CD8-positive, alpha-beta T cell (primary cell): ENCODE measurements at regions of chr1 and their contacts with region 1.

Region 1: GRCh38 chr1:229341774-229342655 is 832 bp downstream of the CCSAP start:
- DNase-seq: peak; percentile 61 to 90 (median 82)
- ATAC-seq: peak; percentile 80
- H3K4me3 ChIP-seq: peak overlapping the region; percentile 65 to 74
- H3K4me3 Mint-ChIP-seq: peak overlapping the region; percentile 92
- H3K27ac ChIP-seq: peak overlapping the region; percentile 48 to 83
- H3K27ac Mint-ChIP-seq: peak overlapping the region; percentile 87
- H3K4me1 ChIP-seq: peaks cover 18% of the 10 kb centered on the region
- H3K4me1 Mint-ChIP-seq: peaks cover 40% of the 10 kb centered on the region
- H3K27me3 ChIP-seq: no peaks in the 10 kb centered on the region
- H3K27me3 Mint-ChIP-seq: no peaks in the 10 kb centered on the region
- CTCF ChIP-seq: no peak

Region 2: DNA sequence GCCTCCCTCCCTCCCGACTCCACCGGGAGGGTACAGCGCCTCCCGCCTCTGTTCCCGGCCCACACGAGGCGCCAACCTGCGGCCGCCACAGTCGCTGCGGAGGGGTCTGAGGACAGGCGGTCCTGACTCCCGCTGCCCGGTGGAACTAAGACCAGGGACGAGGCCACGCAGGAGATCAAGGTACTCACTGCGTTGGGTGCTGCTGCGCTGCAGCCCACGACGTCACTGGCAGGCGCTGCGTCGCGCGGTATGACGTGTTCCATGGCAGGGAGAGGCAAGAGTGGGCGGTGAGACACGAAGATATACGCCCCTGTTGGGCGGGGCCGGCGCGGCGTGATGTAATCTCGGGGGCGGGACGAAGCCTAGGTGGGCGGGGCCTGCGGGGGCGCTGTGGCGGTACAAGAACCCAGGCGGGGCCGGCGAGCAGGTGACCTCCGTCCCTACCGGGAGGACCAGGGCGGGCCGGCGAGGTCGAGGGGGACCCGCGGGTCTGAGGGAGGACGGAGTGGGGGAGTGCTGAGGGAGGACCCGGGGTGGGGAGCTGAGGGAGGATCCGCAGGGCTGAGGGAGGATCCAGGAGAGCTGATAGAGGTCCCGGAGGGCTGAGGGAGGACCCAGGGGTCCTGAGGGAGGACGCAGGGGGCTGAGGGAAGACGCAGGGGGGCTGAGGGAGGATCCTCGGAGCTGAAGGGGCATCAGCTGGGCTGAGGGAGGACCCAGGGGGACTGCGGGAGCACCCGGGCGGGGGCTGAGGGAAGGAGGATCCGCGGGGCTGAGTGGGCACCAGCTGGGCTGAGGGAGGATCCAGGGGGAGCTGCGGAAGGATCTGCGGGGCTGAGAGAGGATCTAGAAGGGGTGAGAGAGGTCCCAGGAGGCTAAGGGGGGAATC is 1232.7 kb before region 1 on chr1 and contains the start of gene MRPL55:
- CTCF ChIA-PET with region 1: no interaction called
- POLR2A ChIA-PET with region 1: no interaction called
- intact Hi-C with region 1: loop called in 1 of 2 experiments (anchors 10 kb)
- DNase-seq: peak; percentile 97 to 100 (median 98)
- ATAC-seq: peak; percentile 97
- H3K4me3 ChIP-seq: peak within 1 kb of the TSS; percentile 93 to 98
- H3K4me3 Mint-ChIP-seq: peak within 1 kb of the TSS; percentile 95
- H3K27ac ChIP-seq: peak within 1 kb of the TSS; percentile 90 to 94
- H3K27ac Mint-ChIP-seq: peak within 1 kb of the TSS; percentile 96
- H3K4me1 ChIP-seq: peaks cover 21% of the 10 kb centered on the region
- H3K4me1 Mint-ChIP-seq: peaks cover 26% of the 10 kb centered on the region
- H3K27me3 ChIP-seq: no peaks in the 10 kb centered on the region
- H3K27me3 Mint-ChIP-seq: no peaks in the 10 kb centered on the region
- CTCF ChIP-seq: no peak
- total RNA-seq, gene MRPL55: 90.2 to 90.7 TPM

Region 3: DNA sequence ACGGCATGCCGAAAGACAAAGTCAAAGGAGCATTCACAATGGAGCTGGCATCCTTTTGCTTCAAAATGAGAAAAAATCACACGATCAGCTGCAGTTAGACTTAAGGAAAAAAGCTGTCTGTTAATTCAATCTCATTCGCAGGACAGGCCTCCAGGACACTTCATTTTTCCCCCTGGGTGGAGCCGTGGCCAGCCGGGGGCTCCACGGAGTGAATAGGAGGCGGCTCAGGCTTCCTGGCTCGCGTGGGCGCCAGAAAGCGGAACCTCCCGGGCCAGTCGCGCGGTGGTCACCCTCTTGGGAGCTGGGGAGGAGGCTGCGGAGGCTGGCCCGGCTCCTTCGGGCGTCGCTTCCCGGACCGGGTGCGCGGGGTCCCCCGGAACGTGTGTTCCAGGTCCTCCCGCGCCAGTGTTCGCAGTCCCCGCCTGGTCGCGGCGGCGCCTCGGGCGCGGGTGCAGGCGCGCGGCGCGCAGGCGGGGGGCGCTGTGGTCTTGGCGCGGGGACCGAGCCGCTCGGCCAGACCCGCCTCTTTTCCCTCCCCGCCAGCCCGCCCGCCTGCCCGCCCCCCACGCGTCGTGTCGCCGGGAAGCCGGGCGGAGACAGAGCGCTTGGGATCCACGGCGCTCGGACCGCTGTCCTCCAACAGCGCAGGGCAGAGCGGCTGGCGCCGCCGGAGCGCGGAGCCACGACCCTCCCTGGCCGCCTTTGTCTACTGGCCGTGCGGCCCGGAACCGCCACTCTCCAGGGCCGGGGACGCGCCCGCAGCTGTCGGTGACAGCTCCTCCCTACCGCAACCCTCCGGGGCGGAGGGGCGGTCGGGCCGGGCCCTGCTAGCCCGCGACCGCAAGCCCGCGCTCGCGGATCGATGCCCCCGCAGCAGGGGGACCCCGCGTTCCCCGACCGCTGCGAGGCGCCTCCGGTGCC is 606.9 kb before region 1 on chr1 and contains the start of gene RHOU:
- CTCF ChIA-PET with region 1: no interaction called
- POLR2A ChIA-PET with region 1: no interaction called
- intact Hi-C with region 1: loop called in 1 of 2 experiments (anchors 2 kb)
- DNase-seq: peak; percentile 53 to 84 (median 67)
- ATAC-seq: peak; percentile 87
- H3K4me3 ChIP-seq: peak within 1 kb of the TSS; percentile 44 to 68
- H3K4me3 Mint-ChIP-seq: peak within 1 kb of the TSS; percentile 87
- H3K27ac ChIP-seq: peak within 1 kb of the TSS in 1 of 2 experiments; percentile 33
- H3K27ac Mint-ChIP-seq: peak within 1 kb of the TSS; percentile 49
- H3K4me1 ChIP-seq: peaks cover 4% of the 10 kb centered on the region
- H3K4me1 Mint-ChIP-seq: peaks cover 21% of the 10 kb centered on the region
- H3K27me3 ChIP-seq: no peaks in the 10 kb centered on the region
- H3K27me3 Mint-ChIP-seq: peaks cover 8% of the 10 kb centered on the region
- CTCF ChIP-seq: peak; percentile 73
- total RNA-seq, gene RHOU: 0.39 to 0.57 TPM

Region 4: DNA sequence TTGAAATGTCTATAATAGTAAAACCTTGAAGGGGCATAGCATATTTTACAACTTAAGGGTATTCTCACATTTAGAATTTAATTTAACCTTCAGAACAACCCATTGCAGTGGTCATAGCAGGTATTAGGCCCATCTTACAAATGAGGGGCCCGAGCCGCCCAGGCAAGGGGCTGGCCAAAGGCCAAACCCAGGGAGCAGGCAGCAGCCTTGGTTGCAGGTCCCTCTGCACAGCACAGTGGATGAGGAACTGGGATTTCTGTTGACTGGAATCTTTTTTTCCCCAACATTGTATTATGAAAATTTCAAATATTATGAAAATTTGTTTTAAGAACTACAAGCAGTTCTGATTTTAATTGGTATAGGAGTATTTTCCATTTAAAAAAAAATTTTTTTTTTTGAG is 32.3 kb before region 1 on chr1:
- CTCF ChIA-PET with region 1: no interaction called
- POLR2A ChIA-PET with region 1: no interaction called
- intact Hi-C with region 1: no loop called
- DNase-seq: no peak
- ATAC-seq: no peak
- H3K4me3 ChIP-seq: no peak overlapping the region
- H3K4me3 Mint-ChIP-seq: no peak overlapping the region
- H3K27ac ChIP-seq: no peak overlapping the region
- H3K27ac Mint-ChIP-seq: no peak overlapping the region
- H3K4me1 ChIP-seq: no peaks in the 10 kb centered on the region
- H3K4me1 Mint-ChIP-seq: no peaks in the 10 kb centered on the region
- H3K27me3 ChIP-seq: no peaks in the 10 kb centered on the region
- H3K27me3 Mint-ChIP-seq: no peaks in the 10 kb centered on the region
- CTCF ChIP-seq: no peak

Region 5: DNA sequence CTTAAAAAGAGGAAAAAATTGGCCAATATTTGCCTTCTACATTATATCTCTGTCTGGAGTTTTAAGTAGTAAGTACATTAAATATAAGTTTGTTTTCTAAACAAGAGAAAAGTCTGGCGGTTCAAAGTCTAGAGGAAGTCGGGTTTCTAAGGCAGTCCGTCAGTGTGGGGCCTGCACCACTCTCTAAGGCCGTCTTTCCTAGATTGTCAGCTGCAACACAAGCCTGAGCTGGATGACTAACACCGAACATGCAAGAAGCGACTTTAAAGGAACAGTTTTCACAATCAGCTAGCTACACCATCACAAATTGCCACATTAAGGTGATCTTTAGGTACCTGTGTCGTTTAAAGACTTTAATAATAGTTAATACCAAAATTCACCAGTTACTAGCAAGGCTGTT is 18.8 kb before region 1 on chr1:
- CTCF ChIA-PET with region 1: no interaction called
- POLR2A ChIA-PET with region 1: no interaction called
- intact Hi-C with region 1: loop called in 1 of 2 experiments (anchors 2 kb)
- DNase-seq: no peak
- ATAC-seq: no peak
- H3K4me3 ChIP-seq: no peak overlapping the region
- H3K4me3 Mint-ChIP-seq: no peak overlapping the region
- H3K27ac ChIP-seq: no peak overlapping the region
- H3K27ac Mint-ChIP-seq: no peak overlapping the region
- H3K4me1 ChIP-seq: no peaks in the 10 kb centered on the region
- H3K4me1 Mint-ChIP-seq: peaks cover 1% of the 10 kb centered on the region
- H3K27me3 ChIP-seq: no peaks in the 10 kb centered on the region
- H3K27me3 Mint-ChIP-seq: no peaks in the 10 kb centered on the region
- CTCF ChIP-seq: no peak

Region 6: DNA sequence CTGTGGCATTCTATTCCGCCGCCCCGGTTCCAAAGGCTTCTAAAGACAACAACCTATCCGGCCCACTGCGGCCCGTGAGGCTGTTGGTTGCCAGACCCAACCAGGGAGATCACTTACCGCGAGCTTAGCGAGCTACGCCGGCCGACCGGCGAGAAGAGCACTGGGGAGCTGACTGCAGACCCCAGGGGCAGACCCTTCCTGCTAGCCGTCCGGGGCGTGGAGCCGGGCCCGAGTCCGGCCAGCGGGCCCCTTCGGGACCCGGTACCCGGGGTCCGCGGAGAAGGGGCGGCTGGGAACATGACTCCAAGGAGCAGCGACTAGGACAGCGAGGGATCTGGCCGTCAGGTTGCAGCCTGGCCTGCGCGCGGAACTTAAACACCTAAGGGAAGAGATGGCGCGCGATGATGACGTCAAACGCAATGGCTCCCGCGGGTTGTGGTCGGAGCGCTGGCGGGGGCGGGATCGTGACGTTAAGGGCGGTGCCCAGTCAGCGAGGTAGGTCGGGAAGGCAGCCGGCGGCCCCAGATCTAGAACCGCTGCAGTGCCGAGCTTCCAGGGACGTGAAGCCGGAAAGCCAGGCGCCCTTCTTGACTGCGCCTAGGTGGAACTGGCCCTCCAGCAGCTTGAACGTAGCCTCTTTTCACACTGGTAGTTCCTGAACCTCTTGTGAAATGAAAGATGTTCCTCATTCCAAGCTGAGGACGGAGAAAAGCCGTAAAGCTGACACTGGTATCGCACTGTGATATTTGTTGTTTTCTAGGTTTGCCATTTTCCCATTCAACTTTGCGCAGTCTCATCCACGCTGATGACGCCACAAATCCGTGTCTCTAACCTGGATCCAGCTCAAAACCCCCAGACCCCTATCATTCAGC is 166.2 kb after region 1 on chr1 and contains the start of gene NUP133:
- CTCF ChIA-PET with region 1: no interaction called
- POLR2A ChIA-PET with region 1: interaction called, 3 read pairs
- intact Hi-C with region 1: loop called (anchors 1 to 2 kb)
- DNase-seq: peak; percentile 96 to 100 (median 99)
- ATAC-seq: peak; percentile 94
- H3K4me3 ChIP-seq: peak within 1 kb of the TSS; percentile 94 to 99
- H3K4me3 Mint-ChIP-seq: peak within 1 kb of the TSS; percentile 87
- H3K27ac ChIP-seq: peak within 1 kb of the TSS; percentile 93 to 97
- H3K27ac Mint-ChIP-seq: peak within 1 kb of the TSS; percentile 99
- H3K4me1 ChIP-seq: peaks cover 20% of the 10 kb centered on the region
- H3K4me1 Mint-ChIP-seq: peaks cover 29% of the 10 kb centered on the region
- H3K27me3 ChIP-seq: no peaks in the 10 kb centered on the region
- H3K27me3 Mint-ChIP-seq: no peaks in the 10 kb centered on the region
- CTCF ChIP-seq: no peak
- total RNA-seq, gene NUP133: 49.0 to 50.7 TPM

Region 7: DNA sequence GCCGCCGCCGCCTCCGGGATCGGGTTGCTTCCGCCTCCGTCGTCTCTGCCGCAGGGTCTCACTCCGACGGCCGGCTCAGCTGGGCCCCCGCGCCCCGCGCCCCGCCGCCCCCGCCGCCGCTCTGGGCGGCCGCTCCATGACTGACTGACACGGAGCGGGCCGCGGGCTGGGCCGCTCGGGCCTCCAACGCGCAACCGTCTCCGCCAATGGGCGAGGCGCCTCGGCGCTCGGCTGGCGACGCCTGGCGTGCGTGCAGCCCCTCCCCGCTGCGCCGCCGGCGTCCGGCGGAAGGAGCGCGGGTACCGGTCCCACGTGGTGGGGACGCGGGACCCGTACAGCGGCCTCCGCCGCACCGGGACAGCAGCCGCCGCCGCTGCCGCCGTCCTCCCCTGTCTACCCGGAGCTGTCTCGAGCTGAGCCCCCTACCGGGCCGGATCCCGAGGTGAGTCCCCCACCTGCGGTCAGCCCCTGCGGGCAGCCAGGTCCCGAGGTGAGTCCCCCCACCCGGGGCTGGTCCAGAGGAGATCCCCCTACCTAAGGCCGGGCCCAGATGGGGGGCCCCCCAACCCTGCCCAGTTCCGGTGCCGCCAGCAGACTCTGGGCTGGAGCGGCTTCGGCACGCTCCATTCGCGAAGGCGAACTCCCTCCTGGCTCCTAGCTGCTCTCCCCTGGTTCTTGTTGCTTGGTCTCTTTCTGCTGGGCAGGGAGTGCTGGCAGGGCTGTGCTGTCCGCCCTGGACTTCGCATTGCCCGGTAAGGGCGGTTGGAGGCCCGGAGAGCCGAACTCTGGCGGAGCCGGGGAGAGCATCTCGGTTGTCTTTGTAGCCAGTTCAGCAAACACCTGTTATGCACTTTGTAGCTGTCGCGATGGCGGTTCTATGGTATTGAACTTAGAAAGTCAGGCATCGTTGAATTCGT is 284.2 kb after region 1 on chr1 and contains the starts of genes TAF5L and URB2:
- CTCF ChIA-PET with region 1: no interaction called
- POLR2A ChIA-PET with region 1: interaction called, 4 read pairs
- intact Hi-C with region 1: loop called (anchors 2 kb)
- DNase-seq: peak; percentile 60 to 94 (median 81)
- ATAC-seq: peak; percentile 90
- H3K4me3 ChIP-seq: peak within 1 kb of the TSS; percentile 92 to 95
- H3K4me3 Mint-ChIP-seq: peak within 1 kb of the TSS; percentile 99
- H3K27ac ChIP-seq: peak within 1 kb of the TSS; percentile 70 to 78
- H3K27ac Mint-ChIP-seq: peak within 1 kb of the TSS; percentile 95
- H3K4me1 ChIP-seq: peaks cover 29% of the 10 kb centered on the region
- H3K4me1 Mint-ChIP-seq: peaks cover 54% of the 10 kb centered on the region
- H3K27me3 ChIP-seq: no peaks in the 10 kb centered on the region
- H3K27me3 Mint-ChIP-seq: no peaks in the 10 kb centered on the region
- CTCF ChIP-seq: no peak
- total RNA-seq, gene TAF5L: 25.4 to 28.0 TPM
- total RNA-seq, gene URB2: 8.5 to 8.6 TPM